Pancreas (tissue), 10 donors: ENCODE measurements at regions of chr2 and their contacts with region 1.

Region 1: GRCh38 chr2:225282858-225283710 is 116.4 kb upstream of the NYAP2 start:
- DNase-seq: peak in 1 of 6 donors; percentile 29
- ATAC-seq: peak in 3 of 4 donors; percentile 80 to 90 (median 86)
- H3K4me3 ChIP-seq: no peak overlapping the region
- H3K27ac ChIP-seq: no peak overlapping the region
- H3K4me1 ChIP-seq: no peaks in the 10 kb centered on the region
- H3K27me3 ChIP-seq: no peaks in the 10 kb centered on the region
- CTCF ChIP-seq: peak; percentile 58 to 74 (median 69)

Region 2: DNA sequence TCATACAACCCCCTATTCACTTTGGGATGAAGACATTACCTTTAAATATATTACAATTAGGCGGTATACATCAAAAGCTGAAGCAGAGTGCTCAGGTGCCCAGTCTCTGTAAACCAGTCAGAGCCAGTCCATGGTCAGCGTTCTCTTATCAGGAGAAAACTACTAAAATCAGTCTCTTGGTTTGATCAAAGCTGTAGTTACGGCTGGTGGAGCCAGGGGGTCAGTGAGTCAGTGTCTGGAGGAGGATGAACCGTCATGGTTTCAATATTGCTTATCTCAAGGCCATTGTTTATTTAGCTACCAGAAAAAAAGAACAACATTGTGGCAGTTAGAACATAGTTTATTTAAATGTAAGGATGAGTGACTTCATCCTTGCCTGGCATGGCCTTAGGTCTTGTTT is 45.1 kb after region 1 on chr2:
- intact Hi-C with region 1: no loop called
- DNase-seq: no peak
- ATAC-seq: peak in 2 of 4 donors; percentile 30 to 41
- H3K4me3 ChIP-seq: no peak overlapping the region
- H3K27ac ChIP-seq: no peak overlapping the region
- H3K4me1 ChIP-seq: no peaks in the 10 kb centered on the region
- H3K27me3 ChIP-seq: no peaks in the 10 kb centered on the region
- CTCF ChIP-seq: no peak

Region 3: DNA sequence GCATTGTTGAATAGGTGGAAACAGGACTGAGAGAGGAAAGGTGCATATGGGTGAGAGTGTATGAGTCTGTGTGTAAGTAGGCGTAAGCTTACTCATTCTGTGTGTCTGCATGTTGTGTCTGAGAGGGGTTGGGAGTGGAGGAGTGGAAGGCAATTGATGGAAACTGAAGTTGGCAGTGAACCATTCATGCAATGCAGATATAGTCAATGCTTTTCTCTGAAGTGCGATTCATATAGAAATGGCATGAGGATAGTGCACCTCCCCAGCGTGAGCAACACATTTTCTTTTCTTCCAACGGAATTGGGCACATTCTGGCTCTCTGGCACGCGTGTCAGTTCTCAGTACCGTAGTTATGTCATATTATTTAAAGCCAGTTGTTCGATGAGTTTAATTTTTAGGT is 367.0 kb after region 1 on chr2:
- intact Hi-C with region 1: loop called in 2 of 3 experiments (anchors 5 to 10 kb)
- DNase-seq: no peak
- ATAC-seq: no peak
- H3K4me3 ChIP-seq: no peak overlapping the region
- H3K27ac ChIP-seq: no peak overlapping the region
- H3K4me1 ChIP-seq: no peaks in the 10 kb centered on the region
- H3K27me3 ChIP-seq: no peaks in the 10 kb centered on the region
- CTCF ChIP-seq: no peak

Region 4: DNA sequence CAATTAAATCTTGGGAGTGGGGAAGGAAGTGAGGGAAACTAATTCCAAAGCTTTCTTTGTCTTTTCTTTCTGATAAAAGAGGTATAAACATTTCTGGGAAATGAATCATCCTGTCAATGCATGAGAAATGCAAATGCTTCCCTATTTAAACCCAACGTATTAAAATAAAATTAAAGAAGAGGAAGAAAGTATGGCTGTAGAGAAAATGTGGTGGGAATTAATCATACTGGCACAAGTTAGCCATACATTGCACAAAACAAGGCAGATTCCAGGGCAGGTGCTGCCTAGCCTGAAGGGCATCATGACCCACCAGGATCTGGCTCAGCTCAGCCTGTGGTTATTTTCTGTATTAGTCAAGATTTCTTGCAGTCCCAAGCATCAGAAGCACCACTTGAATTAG is 454.5 kb after region 1 on chr2:
- intact Hi-C with region 1: no loop called
- DNase-seq: no peak
- ATAC-seq: no peak
- H3K4me3 ChIP-seq: no peak overlapping the region
- H3K27ac ChIP-seq: no peak overlapping the region
- H3K4me1 ChIP-seq: no peaks in the 10 kb centered on the region
- H3K27me3 ChIP-seq: no peaks in the 10 kb centered on the region
- CTCF ChIP-seq: no peak